Psoas muscle (tissue), 8 donors: ENCODE measurements at regions of chr17 and their contacts with region 1.

Region 1: DNA sequence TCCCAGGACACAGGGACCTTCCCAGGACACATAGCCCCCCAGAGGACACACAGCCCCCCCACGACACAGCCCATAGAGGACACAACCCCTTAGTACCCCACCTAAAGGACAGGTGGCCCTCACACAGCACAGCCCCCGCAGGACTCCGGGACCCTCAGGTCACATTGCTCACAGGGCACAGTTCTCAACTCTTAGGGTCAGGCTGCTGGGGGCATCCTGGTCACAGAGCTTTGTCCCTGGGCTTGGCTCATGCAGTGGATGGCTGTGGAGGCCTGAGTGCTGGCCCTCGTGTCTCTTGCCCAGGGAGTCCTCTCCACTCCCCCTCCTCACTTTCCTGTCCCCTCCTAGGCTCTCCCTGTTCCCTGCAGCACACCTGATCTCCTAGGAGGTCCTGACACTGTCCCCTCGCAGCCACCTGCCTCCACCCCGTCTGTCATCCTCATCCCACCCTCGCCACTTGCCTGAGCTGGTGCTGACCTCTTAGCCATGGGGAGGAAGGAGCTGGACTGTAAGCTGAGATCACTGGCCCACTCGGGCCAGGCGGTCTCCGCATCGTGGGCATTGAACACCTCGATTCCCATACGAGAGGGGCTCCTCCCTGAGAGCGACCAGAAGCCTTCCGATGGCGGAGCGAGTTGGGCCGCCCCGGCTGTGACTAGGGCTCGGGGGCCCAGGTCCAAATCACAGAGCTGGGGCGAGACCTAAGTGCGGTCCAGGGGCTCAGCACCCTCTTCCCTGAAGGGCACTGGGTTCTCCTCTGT is 1.4 kb upstream of the WDR45B start:
- DNase-seq: no peak
- ATAC-seq: no peak
- H3K4me3 ChIP-seq: no peak overlapping the region
- H3K27ac ChIP-seq: no peak overlapping the region
- H3K4me1 ChIP-seq: peaks cover 16% of the 10 kb centered on the region
- H3K27me3 ChIP-seq: no peaks in the 10 kb centered on the region
- CTCF ChIP-seq: no peak

Region 2: GRCh38 chr17:82702231-82702927 is 52.7 kb after region 1 on chr17:
- intact Hi-C with region 1: loop called in 1 of 2 experiments (anchors 5 kb)
- DNase-seq: no peak
- ATAC-seq: no peak
- H3K4me3 ChIP-seq: no peak overlapping the region
- H3K27ac ChIP-seq: no peak overlapping the region
- H3K4me1 ChIP-seq: peaks cover 2% of the 10 kb centered on the region
- H3K27me3 ChIP-seq: no peaks in the 10 kb centered on the region
- CTCF ChIP-seq: no peak